ENCODE measurements at regions of chr6 and their contacts with region 1.

Region 1: DNA sequence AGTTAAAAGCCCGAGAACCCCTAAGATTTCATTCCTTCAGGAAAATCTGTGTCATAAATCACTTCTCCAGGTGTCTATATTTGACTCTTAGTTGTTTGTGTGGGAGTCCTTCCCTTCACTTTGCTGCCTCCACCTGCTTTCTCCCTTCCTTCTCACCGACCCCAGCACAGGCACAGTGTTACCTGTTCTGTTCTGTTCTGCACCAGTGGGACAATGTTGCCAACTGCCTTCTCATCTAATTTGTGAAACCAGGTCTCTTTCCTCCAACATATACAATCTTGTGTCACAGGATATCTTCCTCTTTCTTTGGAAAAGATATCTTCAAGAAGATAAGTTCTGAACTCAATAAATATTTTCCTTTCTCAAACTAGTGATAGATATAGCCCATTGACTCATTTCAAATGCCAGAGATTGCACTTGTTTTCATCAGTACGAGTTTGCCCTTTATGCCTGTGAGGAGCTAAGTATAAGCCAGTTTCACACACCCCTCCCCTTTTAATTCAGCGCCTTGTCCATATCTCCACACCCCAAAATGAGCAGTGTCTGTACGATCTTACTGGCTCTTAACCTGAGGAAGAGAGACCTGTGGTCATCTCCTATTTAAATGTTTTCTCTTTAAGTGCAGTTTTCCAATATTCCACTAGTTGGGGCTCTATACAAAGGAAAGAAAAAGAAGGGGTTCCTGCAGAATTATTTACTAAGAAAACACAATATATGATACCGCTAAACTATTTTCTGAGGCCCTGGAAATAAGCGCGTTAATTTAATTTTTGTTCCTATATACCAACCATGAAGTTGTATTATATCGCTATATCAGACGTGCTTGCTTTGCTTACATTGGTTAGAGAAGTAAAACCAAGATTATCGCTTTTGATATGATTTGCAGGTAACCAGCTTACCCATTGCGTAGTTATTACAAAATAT is 81.6 kb upstream of the PREP start:
- H3K4me3 Mint-ChIP-seq: no peak overlapping the region
- H3K27ac Mint-ChIP-seq: no peak overlapping the region
- H3K4me1 Mint-ChIP-seq: peaks cover 35% of the 10 kb centered on the region
- H3K27me3 Mint-ChIP-seq: no peaks in the 10 kb centered on the region

Region 2: DNA sequence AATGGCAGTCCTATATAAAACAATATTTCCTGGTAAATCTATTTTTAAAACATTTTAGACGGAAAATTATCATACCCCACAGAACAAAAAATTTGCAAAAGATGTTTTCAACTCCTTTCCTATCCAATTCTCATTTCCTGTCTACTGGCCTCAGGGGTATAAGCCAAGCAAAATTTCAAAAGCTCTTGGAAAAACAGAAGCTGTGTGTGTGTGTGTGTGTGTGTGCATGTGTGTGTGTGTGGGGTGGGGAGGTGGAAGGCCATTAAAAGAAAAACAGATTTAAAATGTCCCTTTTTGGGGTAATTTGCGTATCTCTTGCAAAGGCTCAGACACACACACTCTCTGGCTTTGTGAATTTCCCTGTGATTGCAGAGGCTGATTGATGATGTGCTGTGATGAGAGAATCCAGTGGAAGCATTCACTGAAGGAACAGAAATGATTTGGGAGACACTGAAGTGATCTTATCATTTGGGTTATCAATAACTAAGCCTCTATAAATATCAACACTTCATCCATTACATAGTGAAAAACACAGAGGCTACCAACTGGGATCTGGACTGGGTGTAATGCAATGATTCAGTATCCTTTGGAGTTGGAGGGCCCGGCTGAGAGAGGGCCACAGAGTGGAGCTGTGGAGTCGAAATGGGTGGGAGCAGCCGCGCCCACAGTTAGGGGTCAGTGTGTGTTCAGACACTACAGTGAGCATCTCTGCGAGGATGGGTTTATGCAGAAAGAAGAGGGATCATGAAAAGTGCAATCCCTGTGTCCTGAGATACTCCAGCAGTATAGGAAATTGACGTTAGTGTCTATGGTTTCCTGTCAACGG is 25.2 kb after region 1 on chr6:
- intact Hi-C with region 1: no loop called
- H3K4me3 Mint-ChIP-seq: no peak overlapping the region
- H3K27ac Mint-ChIP-seq: no peak overlapping the region
- H3K4me1 Mint-ChIP-seq: no peaks in the 10 kb centered on the region
- H3K27me3 Mint-ChIP-seq: peaks cover 3% of the 10 kb centered on the region

Region 3: GRCh38 chr6:105633814-105634213 is 149.3 kb after region 1 on chr6:
- intact Hi-C with region 1: no loop called
- H3K4me3 Mint-ChIP-seq: no peak overlapping the region
- H3K27ac Mint-ChIP-seq: no peak overlapping the region
- H3K4me1 Mint-ChIP-seq: no peaks in the 10 kb centered on the region
- H3K27me3 Mint-ChIP-seq: peaks cover 5% of the 10 kb centered on the region

Region 4: DNA sequence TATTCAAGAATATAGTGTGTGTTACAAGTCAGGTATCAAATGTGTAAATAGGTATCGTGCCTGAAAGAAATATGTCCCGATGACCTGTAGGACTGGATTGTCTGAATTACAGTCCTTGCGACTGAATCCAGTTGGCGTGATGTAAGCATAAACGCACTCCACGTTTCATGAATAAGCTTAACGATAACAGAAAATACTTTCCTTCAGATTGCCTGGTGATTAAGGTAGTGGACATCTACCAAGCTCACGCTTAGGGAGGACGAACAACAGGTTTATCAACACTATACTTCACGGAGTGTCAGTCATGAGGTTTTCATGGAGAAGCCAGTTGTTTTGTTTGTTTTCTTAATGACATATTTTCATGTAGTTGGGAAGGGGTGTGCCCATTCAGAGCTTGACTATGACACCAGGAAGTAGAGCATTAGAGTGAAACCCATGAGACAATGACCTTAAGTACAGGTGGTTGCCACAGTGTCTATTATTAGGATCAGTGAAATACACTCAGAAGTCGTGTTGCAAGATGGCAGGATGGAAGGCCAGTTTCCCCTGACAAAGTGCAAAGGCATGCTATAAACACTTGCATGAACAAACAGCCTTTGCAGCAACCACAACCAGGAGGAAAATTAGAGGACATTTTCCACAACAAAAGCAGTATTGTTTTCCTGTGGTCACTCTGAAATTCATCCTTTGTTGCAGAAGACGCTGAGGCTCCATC is 295.8 kb after region 1 on chr6:
- intact Hi-C with region 1: loop called (anchors 5 kb)
- H3K4me3 Mint-ChIP-seq: no peak overlapping the region
- H3K27ac Mint-ChIP-seq: no peak overlapping the region
- H3K4me1 Mint-ChIP-seq: peaks cover 23% of the 10 kb centered on the region
- H3K27me3 Mint-ChIP-seq: no peaks in the 10 kb centered on the region

Region 5: GRCh38 chr6:105900125-105900937 is 415.8 kb after region 1 on chr6:
- intact Hi-C with region 1: loop called (anchors 10 kb)
- H3K4me3 Mint-ChIP-seq: peak overlapping the region; percentile 6
- H3K27ac Mint-ChIP-seq: peak overlapping the region; percentile 81
- H3K4me1 Mint-ChIP-seq: peaks cover 27% of the 10 kb centered on the region
- H3K27me3 Mint-ChIP-seq: no peaks in the 10 kb centered on the region

Region 6: GRCh38 chr6:105992315-105992961 is 507.9 kb after region 1 on chr6:
- intact Hi-C with region 1: loop called (anchors 10 kb)
- H3K4me3 Mint-ChIP-seq: peak overlapping the region; percentile 93
- H3K27ac Mint-ChIP-seq: peak overlapping the region; percentile 93
- H3K4me1 Mint-ChIP-seq: peaks cover 51% of the 10 kb centered on the region
- H3K27me3 Mint-ChIP-seq: peaks cover 15% of the 10 kb centered on the region

Region 7: DNA sequence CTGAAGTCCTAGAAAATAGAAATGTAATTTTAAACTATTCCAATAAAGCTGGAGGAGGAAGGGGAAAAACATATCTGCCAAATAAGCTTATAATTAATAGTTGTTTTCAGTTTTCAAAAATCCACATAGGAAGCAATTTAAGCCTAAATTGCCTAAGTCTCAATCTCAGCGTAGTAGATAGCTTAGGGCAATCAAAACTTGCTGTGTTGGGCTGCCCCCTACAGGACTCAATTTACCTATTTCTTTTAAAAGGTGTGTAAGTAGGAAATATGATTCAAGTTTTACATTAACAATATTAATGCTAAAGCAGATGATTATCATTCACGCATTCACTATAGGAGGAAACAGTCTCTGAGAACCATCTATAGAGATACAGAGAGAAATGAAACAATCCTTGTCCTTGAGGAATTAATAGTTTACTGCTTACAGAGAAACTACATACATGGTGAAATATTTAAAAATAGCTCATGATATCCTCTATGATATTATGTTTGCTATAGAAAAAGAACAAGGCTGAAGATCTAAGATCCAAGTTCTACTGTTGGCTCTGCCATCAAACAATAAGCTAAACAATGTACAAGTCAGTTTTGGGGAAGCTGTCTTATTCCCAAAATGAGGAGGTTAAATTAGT is 738.9 kb after region 1 on chr6:
- intact Hi-C with region 1: loop called (anchors 10 kb)
- H3K4me3 Mint-ChIP-seq: no peak overlapping the region
- H3K27ac Mint-ChIP-seq: no peak overlapping the region
- H3K4me1 Mint-ChIP-seq: peaks cover 24% of the 10 kb centered on the region
- H3K27me3 Mint-ChIP-seq: no peaks in the 10 kb centered on the region

Region 8: GRCh38 chr6:106300944-106301343 is 816.4 kb after region 1 on chr6:
- intact Hi-C with region 1: loop called (anchors 5 kb)
- H3K4me3 Mint-ChIP-seq: no peak overlapping the region
- H3K27ac Mint-ChIP-seq: no peak overlapping the region
- H3K4me1 Mint-ChIP-seq: no peaks in the 10 kb centered on the region
- H3K27me3 Mint-ChIP-seq: no peaks in the 10 kb centered on the region

Measured in dendritic cell treated with granulocyte-macrophage colony-stimulating factor and Interleukin-4, amounts not matched to agents 40 ng/mL and 50 ng/mL, for 4 days (primary cell).